ENCODE measurements at regions of chr9 and their contacts with region 1.

Region 1: GRCh38 chr9:1922026-1922425 is 93.1 kb upstream of the SMARCA2 start:
- DNase-seq: peak; percentile 23
- ATAC-seq: peak; percentile 50; the same call in 1 of the 2 replicates
- H3K4me3 Mint-ChIP-seq: no peak overlapping the region
- H3K27ac Mint-ChIP-seq: no peak overlapping the region
- H3K4me1 Mint-ChIP-seq: peaks cover 22% of the 10 kb centered on the region
- H3K27me3 Mint-ChIP-seq: no peaks in the 10 kb centered on the region
- CTCF ChIP-seq: no peak

Region 2: DNA sequence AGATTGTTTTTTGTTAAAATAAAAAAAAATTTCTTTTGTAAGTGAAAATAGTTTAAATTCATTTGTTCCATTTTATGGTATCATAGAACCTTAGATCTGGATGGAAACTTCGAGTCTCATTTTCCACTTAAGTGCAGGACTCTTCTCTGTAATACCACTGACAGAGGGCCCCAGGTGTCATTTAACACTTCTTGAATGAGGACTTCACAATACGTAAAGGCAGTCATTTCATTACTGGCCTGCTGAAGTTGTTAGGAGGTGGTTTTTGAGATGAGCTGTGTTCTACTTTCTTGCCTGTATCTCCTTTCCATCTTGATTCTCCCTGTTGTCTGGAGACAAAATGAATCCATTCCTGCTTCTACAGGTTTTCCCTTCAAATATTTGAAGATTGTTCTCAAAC is 416.5 kb before region 1 on chr9:
- CTCF ChIA-PET with region 1: no interaction called
- POLR2A ChIA-PET with region 1: no interaction called
- DNase-seq: no peak
- ATAC-seq: no peak
- H3K4me3 Mint-ChIP-seq: no peak overlapping the region
- H3K27ac Mint-ChIP-seq: no peak overlapping the region
- H3K4me1 Mint-ChIP-seq: no peaks in the 10 kb centered on the region
- H3K27me3 Mint-ChIP-seq: no peaks in the 10 kb centered on the region
- CTCF ChIP-seq: no peak

Region 3: GRCh38 chr9:1747417-1747967 is 174.5 kb before region 1 on chr9:
- CTCF ChIA-PET with region 1: no interaction called
- POLR2A ChIA-PET with region 1: no interaction called
- DNase-seq: no peak
- ATAC-seq: no peak
- H3K4me3 Mint-ChIP-seq: no peak overlapping the region
- H3K27ac Mint-ChIP-seq: no peak overlapping the region
- H3K4me1 Mint-ChIP-seq: no peaks in the 10 kb centered on the region
- H3K27me3 Mint-ChIP-seq: no peaks in the 10 kb centered on the region; the same call in none of the 2 replicates
- CTCF ChIP-seq: no peak

Region 4: DNA sequence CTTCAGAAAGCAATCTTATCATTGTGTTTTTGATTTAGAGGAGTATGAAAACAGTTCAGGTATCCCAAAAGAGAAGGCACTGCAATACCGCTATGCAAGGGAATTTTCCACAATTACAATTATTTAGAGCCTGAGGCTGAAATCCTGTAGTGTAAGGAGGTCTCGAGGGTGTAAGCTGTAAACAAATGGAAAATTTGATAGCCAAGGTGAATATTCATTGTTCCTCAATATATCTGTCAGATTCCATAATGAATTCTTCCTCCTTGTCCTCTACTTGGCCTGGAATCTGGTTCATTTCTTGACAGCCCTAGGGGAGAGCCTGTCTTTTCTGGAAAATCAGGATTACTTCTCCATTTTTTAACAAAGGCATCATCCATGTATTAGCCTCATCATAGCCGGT is 30.0 kb after region 1 on chr9:
- CTCF ChIA-PET with region 1: no interaction called
- POLR2A ChIA-PET with region 1: no interaction called
- DNase-seq: no peak
- ATAC-seq: no peak
- H3K4me3 Mint-ChIP-seq: no peak overlapping the region
- H3K27ac Mint-ChIP-seq: no peak overlapping the region
- H3K4me1 Mint-ChIP-seq: 0 out of 2 replicates have a peak, but pooled peaks cover 5% of the 10 kb centered on the region
- H3K27me3 Mint-ChIP-seq: no peaks in the 10 kb centered on the region
- CTCF ChIP-seq: no peak

Region 5: GRCh38 chr9:2116073-2116472 is 194.0 kb after region 1 on chr9:
- CTCF ChIA-PET with region 1: interaction called, 12 read pairs
- POLR2A ChIA-PET with region 1: no interaction called
- DNase-seq: peak; percentile 55
- ATAC-seq: peak; percentile 91
- H3K4me3 Mint-ChIP-seq: no peak overlapping the region
- H3K27ac Mint-ChIP-seq: no peak overlapping the region
- H3K4me1 Mint-ChIP-seq: no peaks in the 10 kb centered on the region
- H3K27me3 Mint-ChIP-seq: no peaks in the 10 kb centered on the region
- CTCF ChIP-seq: peak; percentile 70

Measured in WTC11 (cell line).